Right cardiac atrium (tissue), 5 donors: ENCODE measurements at regions of chr7 and their contacts with region 1.

Region 1: DNA sequence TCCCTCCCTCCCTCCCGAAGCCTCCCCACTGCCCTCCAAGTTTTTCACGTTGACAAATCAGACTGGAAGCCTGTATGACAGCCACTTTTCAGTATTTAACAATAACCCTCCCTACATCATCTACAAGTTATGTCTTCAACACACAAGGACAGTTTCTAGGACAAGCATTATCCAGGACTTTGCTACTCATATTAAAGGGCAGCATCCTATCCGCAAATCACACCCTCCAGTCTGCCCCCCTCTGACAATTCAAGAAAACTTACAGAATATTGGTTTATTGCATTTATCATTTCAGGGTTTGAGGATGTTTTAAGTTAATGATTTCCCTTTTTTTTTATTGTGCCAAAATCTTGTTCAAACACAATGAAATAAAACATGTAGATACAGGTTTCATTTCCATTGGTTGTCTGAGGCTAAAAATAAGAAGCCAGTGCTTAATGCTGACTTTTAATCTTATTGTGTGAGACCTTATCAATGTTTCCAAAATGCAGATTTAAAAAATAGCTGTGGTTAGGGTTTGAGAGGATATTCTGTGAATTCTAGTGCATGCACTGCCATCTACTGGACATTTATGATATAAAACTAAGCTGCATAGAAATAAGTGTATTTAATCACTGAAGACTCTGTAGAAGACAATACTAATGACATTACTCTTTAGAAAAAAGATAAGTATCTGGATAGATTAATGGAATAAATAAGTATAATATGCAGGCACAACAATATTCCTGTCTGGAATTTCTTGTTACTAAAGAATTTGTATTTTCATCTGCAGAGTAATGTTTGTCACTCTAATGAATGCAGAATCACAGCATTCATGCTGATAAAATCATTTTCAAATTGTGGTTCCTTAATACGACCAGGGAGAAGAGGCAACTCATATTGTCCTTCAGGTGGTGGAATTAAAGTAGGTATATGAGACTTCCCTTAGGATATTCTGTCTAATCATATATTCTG is 64.1 kb downstream of the CAV1 start:
- DNase-seq: no peak
- ATAC-seq: peak; percentile 30 to 59
- H3K4me3 ChIP-seq: no peak overlapping the region
- H3K27ac ChIP-seq: peak overlapping the region; percentile 3
- H3K4me1 ChIP-seq: peaks cover 3% of the 10 kb centered on the region
- H3K27me3 ChIP-seq: no peaks in the 10 kb centered on the region

Region 2: DNA sequence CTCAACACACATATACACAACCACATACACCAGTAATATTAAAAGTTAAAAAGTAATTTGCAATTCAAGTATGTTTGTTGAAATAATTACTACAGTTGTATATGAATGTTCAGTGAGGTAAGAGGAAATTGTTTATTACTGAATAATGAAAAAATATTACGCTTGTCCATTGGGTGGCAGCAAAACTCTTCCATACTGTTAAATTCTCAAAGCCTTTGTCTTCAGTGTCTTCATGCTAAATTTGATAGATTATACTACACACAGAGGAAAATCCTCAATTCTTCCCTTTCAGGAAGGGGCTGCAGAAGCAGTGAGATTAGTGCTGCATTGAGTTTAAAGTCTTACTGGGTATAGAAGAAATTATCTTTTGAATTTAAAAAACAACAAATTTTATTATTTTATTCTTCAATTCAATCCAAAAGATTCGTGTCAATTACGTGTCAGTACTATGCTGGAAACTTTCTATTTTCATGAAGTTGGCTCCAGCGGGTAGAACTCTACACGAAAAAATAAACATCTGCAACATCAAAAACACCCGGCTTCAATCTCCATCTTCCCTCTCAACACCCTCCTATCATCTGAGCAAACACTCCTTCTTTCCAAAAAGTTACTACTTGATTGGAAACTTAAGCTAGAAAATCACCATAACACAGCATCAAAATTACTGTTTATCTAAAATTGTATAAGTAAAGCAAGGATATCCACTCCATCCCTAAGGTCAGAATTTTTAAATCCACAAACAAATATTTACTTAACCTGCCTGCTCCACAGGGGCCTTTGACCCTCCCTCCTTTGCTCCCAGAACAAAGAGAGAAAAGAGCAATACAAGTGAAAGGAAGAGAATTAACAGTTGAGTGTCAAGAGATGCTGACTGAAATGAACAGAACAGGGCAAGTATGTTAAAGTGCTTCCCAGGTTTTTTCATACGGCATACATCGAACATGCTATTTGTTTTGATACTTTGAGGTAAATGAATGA is 415.6 kb before region 1 on chr7:
- intact Hi-C with region 1: loop called in 3 of 4 experiments (anchors 5 to 10 kb)
- DNase-seq: no peak
- ATAC-seq: peak; percentile 29 to 55
- H3K4me3 ChIP-seq: no peak overlapping the region
- H3K27ac ChIP-seq: no peak overlapping the region
- H3K4me1 ChIP-seq: no peaks in the 10 kb centered on the region
- H3K27me3 ChIP-seq: no peaks in the 10 kb centered on the region

Region 3: GRCh38 chr7:116258734-116259133 is 330.2 kb before region 1 on chr7:
- intact Hi-C with region 1: loop called (anchors 1 to 5 kb)
- DNase-seq: no peak
- ATAC-seq: peak; percentile 54 to 59
- H3K4me3 ChIP-seq: no peak overlapping the region
- H3K27ac ChIP-seq: no peak overlapping the region
- H3K4me1 ChIP-seq: no peaks in the 10 kb centered on the region
- H3K27me3 ChIP-seq: no peaks in the 10 kb centered on the region

Region 4: GRCh38 chr7:116354546-116355408 is 234.1 kb before region 1 on chr7:
- intact Hi-C with region 1: loop called in 2 of 4 experiments (anchors 10 kb)
- DNase-seq: peak; percentile 81 to 91 (median 87)
- ATAC-seq: peak; percentile 91
- H3K4me3 ChIP-seq: peak overlapping the region; percentile 26
- H3K27ac ChIP-seq: peak overlapping the region; percentile 99
- H3K4me1 ChIP-seq: peaks cover 9% of the 10 kb centered on the region
- H3K27me3 ChIP-seq: no peaks in the 10 kb centered on the region

Region 5: GRCh38 chr7:116525913-116526861 is 62.7 kb before region 1 on chr7:
- intact Hi-C with region 1: loop called in 2 of 4 experiments (anchors 5 to 10 kb)
- DNase-seq: peak; percentile 84 to 94 (median 93)
- ATAC-seq: peak; percentile 89 to 91
- H3K4me3 ChIP-seq: peak overlapping the region; percentile 76
- H3K27ac ChIP-seq: peak overlapping the region; percentile 95
- H3K4me1 ChIP-seq: peaks cover 6% of the 10 kb centered on the region
- H3K27me3 ChIP-seq: no peaks in the 10 kb centered on the region

Region 6: GRCh38 chr7:116665332-116665996 is 76.5 kb after region 1 on chr7:
- intact Hi-C with region 1: loop called in 1 of 4 experiments (anchors 10 kb)
- DNase-seq: no peak
- ATAC-seq: no peak
- H3K4me3 ChIP-seq: no peak overlapping the region
- H3K27ac ChIP-seq: no peak overlapping the region
- H3K4me1 ChIP-seq: no peaks in the 10 kb centered on the region
- H3K27me3 ChIP-seq: no peaks in the 10 kb centered on the region

Region 7: DNA sequence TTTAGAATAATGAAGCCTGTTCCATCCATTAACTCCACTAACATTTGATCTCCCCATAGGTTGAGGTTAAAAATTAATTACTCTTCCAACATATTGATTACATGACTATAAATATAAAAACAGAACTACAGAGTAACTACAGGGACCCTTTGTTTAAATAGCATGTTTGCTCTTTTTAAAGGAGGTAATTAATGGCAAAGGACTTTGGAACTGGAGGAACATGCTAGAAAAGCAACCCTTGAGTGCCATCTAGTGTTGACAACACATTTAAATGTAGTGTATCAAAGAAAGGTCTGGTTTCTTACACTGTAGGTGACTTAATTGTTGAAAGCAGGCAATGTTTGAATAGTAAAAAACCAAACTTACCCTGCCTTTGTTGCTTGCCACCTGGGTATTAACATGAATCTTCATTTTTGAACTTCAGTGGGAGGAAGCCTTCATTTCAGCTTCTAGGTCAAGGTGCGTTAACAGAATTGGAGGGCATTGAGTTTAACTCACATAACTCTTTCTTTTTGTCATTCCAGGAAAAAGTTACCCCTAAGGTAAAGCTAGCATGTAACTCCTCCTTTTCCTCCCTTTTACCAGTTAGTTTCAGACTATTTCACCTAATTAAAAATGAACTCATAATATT is 220.8 kb after region 1 on chr7:
- intact Hi-C with region 1: loop called in 2 of 4 experiments (anchors 5 kb)
- DNase-seq: no peak
- ATAC-seq: peak; percentile 71 to 77
- H3K4me3 ChIP-seq: no peak overlapping the region
- H3K27ac ChIP-seq: no peak overlapping the region
- H3K4me1 ChIP-seq: no peaks in the 10 kb centered on the region
- H3K27me3 ChIP-seq: no peaks in the 10 kb centered on the region